ENCODE measurements at regions of chr4 and their contacts with region 1.

Region 1: GRCh38 chr4:124322234-124323065 is 390.1 kb downstream of the ANKRD50 start:
- DNase-seq: no peak
- H3K4me3 Mint-ChIP-seq: no peak overlapping the region
- H3K27ac Mint-ChIP-seq: no peak overlapping the region
- H3K4me1 Mint-ChIP-seq: peaks cover 7% of the 10 kb centered on the region
- H3K27me3 Mint-ChIP-seq: no peaks in the 10 kb centered on the region
- CTCF ChIP-seq: no peak

Region 2: GRCh38 chr4:123767806-123768205 is 554.6 kb before region 1 on chr4:
- CTCF ChIA-PET with region 1: no interaction called
- intact Hi-C with region 1: loop called (anchors 5 kb)
- DNase-seq: no peak
- H3K4me3 Mint-ChIP-seq: no peak overlapping the region
- H3K27ac Mint-ChIP-seq: no peak overlapping the region
- H3K4me1 Mint-ChIP-seq: peaks cover 3% of the 10 kb centered on the region
- H3K27me3 Mint-ChIP-seq: no peaks in the 10 kb centered on the region
- CTCF ChIP-seq: no peak

Region 3: GRCh38 chr4:123869286-123870060 is 453.0 kb before region 1 on chr4:
- CTCF ChIA-PET with region 1: no interaction called
- intact Hi-C with region 1: loop called (anchors 10 kb)
- DNase-seq: no peak
- H3K4me3 Mint-ChIP-seq: no peak overlapping the region
- H3K27ac Mint-ChIP-seq: no peak overlapping the region
- H3K4me1 Mint-ChIP-seq: no peaks in the 10 kb centered on the region
- H3K27me3 Mint-ChIP-seq: no peaks in the 10 kb centered on the region
- CTCF ChIP-seq: no peak

Region 4: GRCh38 chr4:124262211-124263179 is 60.0 kb before region 1 on chr4:
- CTCF ChIA-PET with region 1: no interaction called
- intact Hi-C with region 1: loop called (anchors 2 kb)
- DNase-seq: peak; percentile 65
- H3K4me3 Mint-ChIP-seq: no peak overlapping the region
- H3K27ac Mint-ChIP-seq: no peak overlapping the region
- H3K4me1 Mint-ChIP-seq: peaks cover 10% of the 10 kb centered on the region
- H3K27me3 Mint-ChIP-seq: no peaks in the 10 kb centered on the region
- CTCF ChIP-seq: peak; percentile 56